ENCODE measurements at regions of chr2 and their contacts with region 1.

Region 1: GRCh38 chr2:73859721-73860586 is 31.2 kb downstream of the STAMBP start:
- DNase-seq: peak; percentile 76
- ATAC-seq: peak; percentile 100
- H3K4me3 Mint-ChIP-seq: no peak overlapping the region
- H3K27ac Mint-ChIP-seq: peak overlapping the region; percentile 77
- H3K4me1 Mint-ChIP-seq: peaks cover 32% of the 10 kb centered on the region
- H3K27me3 Mint-ChIP-seq: no peaks in the 10 kb centered on the region

Region 2: GRCh38 chr2:73588177-73588576 is 271.8 kb before region 1 on chr2:
- CTCF ChIA-PET with region 1: no interaction called
- POLR2A ChIA-PET with region 1: no interaction called
- intact Hi-C with region 1: no loop called
- DNase-seq: no peak
- ATAC-seq: no peak
- H3K4me3 Mint-ChIP-seq: no peak overlapping the region
- H3K27ac Mint-ChIP-seq: no peak overlapping the region
- H3K4me1 Mint-ChIP-seq: peaks cover 7% of the 10 kb centered on the region
- H3K27me3 Mint-ChIP-seq: no peaks in the 10 kb centered on the region

Region 3: GRCh38 chr2:73886357-73886756 is 26.4 kb after region 1 on chr2:
- CTCF ChIA-PET with region 1: no interaction called
- POLR2A ChIA-PET with region 1: no interaction called
- intact Hi-C with region 1: loop called in 1 of 2 experiments (anchors 1 kb)
- DNase-seq: peak; percentile 79
- ATAC-seq: peak; percentile 90
- H3K4me3 Mint-ChIP-seq: no peak overlapping the region
- H3K27ac Mint-ChIP-seq: peak overlapping the region; percentile 78
- H3K4me1 Mint-ChIP-seq: peaks cover 25% of the 10 kb centered on the region
- H3K27me3 Mint-ChIP-seq: peaks cover 6% of the 10 kb centered on the region

Region 4: DNA sequence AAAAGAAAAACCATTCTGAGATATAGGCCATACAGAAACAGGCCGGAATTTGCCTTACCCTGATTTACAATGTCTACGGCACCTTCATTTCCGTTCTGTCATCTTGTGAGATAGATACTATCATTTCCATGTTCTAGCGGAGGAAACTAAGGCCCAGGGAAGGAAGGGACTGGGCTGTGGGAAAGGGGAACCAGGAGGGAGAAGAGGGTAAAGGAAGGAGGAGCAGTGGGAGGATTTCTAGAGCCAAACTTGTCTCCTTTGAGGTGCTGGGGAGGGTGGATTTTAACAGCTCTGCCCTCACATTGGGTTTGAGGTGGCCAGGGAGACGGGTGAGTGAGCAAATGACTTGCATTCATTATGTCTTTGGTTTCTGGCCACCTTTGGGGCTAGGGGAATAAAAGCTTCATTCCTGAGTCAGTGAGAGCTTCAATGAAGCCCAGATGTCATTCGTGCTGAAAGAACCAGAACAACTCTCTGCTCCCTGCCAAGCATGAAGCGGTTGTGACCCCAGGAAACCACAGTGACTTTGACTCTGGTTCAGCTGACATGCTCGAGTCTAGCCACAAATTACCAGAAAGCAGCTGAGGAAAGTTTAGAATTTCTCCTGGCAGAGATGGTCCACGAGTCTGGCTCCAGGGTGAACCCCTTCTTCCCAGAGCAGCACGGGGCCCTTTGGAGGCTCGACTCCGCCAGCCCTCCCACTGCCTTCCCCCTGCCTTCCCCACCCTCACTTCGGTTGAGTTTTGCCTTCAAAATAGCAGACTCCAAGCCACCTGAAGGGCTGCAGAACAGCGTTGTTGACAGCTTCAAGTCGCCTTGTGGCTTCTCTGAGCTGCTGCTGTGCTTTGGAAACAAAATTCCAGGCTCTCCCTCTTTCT is 36.6 kb after region 1 on chr2:
- CTCF ChIA-PET with region 1: interaction called, 4 read pairs
- POLR2A ChIA-PET with region 1: interaction called, 3 read pairs
- intact Hi-C with region 1: loop called in 1 of 2 experiments (anchors 5 kb)
- DNase-seq: peak; percentile 66
- ATAC-seq: peak; percentile 88
- H3K4me3 Mint-ChIP-seq: no peak overlapping the region
- H3K27ac Mint-ChIP-seq: peak overlapping the region; percentile 56
- H3K4me1 Mint-ChIP-seq: peaks cover 33% of the 10 kb centered on the region
- H3K27me3 Mint-ChIP-seq: no peaks in the 10 kb centered on the region

Region 5: GRCh38 chr2:73931531-73932500 is 71.9 kb after region 1 on chr2:
- CTCF ChIA-PET with region 1: no interaction called
- POLR2A ChIA-PET with region 1: no interaction called
- intact Hi-C with region 1: loop called in 1 of 2 experiments (anchors 2 kb)
- DNase-seq: peak; percentile 76
- ATAC-seq: peak; percentile 93
- H3K4me3 Mint-ChIP-seq: peak overlapping the region; percentile 24
- H3K27ac Mint-ChIP-seq: peak overlapping the region; percentile 68
- H3K4me1 Mint-ChIP-seq: peaks cover 76% of the 10 kb centered on the region
- H3K27me3 Mint-ChIP-seq: no peaks in the 10 kb centered on the region

Region 6: GRCh38 chr2:73939419-73939818 is 79.5 kb after region 1 on chr2:
- CTCF ChIA-PET with region 1: no interaction called
- POLR2A ChIA-PET with region 1: no interaction called
- intact Hi-C with region 1: loop called in 1 of 2 experiments (anchors 1 kb)
- DNase-seq: peak; percentile 59
- ATAC-seq: peak; percentile 78
- H3K4me3 Mint-ChIP-seq: no peak overlapping the region
- H3K27ac Mint-ChIP-seq: peak overlapping the region; percentile 71
- H3K4me1 Mint-ChIP-seq: peaks cover 82% of the 10 kb centered on the region
- H3K27me3 Mint-ChIP-seq: no peaks in the 10 kb centered on the region

Measured in activated CD4-positive, alpha-beta T cell treated with anti-CD3 and anti-CD28 coated beads for 36 hours (primary cell).